GM23248 (cell line): ENCODE measurements at regions of chr10 and their contacts with region 1.

Region 1: DNA sequence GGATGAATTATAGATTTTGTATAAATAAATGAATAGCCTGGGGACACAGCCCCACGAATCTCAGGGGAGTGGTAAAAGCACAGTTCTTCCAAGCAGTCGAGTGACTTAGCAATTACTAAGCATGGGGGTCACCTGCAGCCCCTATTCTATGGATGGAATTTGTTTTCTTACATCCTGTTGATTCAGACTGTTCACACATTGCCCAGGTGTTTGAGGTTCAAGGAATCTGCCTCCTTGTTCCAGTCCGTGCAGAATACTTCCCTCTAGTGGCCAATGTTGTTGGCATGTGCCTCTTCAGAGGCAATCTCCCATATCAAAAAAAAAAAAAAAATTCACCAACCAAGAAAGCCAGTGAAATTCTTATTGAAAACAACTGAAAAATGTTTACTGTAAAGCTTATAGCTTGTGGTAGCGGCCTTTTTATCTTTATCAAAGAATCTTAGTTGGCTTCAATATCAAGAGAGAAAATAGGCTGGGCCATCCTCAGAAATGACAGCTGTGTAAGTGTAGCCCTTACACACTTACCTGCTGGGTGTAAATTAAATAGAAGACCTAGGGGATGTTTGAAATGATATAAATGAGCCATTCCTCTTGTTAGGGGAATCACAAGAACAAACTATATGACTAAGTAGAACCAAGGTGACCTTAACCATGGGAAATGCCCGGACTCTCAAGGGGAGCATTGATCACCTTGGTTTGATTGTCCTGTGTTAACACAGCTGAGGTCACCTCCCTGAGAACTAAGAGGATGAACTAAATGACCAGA is 7.8 kb downstream of the LIPM start:
- DNase-seq: peak; percentile 76
- H3K4me3 ChIP-seq: no peak overlapping the region
- H3K27ac ChIP-seq: no peak overlapping the region
- H3K4me1 ChIP-seq: peaks cover 2% of the 10 kb centered on the region; the same call in 1 of the 2 replicates
- H3K27me3 ChIP-seq: peaks cover 8% of the 10 kb centered on the region; the same call in 1 of the 2 replicates

Region 2: DNA sequence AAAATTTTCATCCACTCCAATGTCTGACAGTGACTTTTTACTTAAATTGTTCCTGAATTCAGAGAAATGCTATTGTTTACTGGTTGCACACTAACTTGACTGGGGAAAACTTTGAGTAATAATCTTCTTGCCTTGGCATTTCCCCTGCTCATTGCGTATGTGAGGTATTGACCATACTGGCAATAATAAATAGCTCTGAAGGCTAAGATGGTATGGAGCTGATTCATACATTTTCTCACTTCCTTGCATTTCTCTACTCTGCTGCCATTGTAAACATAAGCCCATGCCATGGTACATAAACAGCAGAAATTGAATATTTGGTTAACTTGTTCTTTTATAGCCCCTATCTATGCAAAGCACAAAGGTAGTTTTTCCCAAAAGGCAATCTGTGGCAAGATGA is 517.3 kb before region 1 on chr10:
- in situ Hi-C with region 1: no loop called
- DNase-seq: no peak
- H3K4me3 ChIP-seq: no peak overlapping the region
- H3K27ac ChIP-seq: no peak overlapping the region
- H3K4me1 ChIP-seq: no peaks in the 10 kb centered on the region
- H3K27me3 ChIP-seq: no peaks in the 10 kb centered on the region

Region 3: DNA sequence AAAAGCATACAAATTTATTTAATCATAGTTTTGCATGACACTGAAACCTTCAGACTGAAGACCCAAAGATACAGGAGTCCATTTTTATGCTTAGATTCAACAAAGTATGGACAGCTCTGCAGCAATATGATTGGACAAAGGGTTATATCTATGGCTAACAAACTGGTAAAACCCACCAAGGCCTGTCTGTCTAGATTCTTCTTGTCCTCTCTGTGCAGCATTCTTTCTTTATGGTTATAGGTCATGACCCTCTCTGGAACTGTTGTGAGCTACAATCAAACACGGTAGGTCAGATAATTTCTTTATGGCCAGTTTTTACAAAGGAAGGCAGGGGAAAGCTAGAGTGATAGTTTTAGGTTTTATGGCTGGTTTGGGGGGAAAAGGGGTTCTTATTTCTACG is 231.3 kb before region 1 on chr10:
- in situ Hi-C with region 1: loop called (anchors 10 kb)
- DNase-seq: no peak
- H3K4me3 ChIP-seq: no peak overlapping the region
- H3K27ac ChIP-seq: no peak overlapping the region
- H3K4me1 ChIP-seq: no peaks in the 10 kb centered on the region
- H3K27me3 ChIP-seq: no peaks in the 10 kb centered on the region

Region 4: DNA sequence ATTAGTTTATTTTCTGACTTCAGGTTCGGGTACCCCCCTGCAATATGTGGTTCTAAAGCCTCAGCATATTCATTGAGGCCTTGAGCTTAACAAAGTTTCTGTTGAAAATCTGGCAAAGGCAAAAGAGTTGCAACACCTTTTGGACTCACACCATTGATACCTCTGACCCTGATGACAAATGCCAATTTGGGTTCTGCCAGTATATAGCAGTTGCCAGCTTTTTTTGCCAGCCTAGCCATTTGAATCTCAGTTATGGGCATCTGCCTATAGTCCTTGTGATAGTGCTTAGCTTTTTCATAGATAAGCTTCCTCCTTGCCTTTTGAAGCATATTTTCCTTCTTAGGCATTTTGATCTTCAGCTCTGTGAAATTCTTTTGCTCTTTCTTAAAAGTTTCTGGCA is 191.9 kb before region 1 on chr10:
- in situ Hi-C with region 1: no loop called
- DNase-seq: peak; percentile 3
- H3K4me3 ChIP-seq: no peak overlapping the region
- H3K27ac ChIP-seq: no peak overlapping the region
- H3K4me1 ChIP-seq: no peaks in the 10 kb centered on the region
- H3K27me3 ChIP-seq: no peaks in the 10 kb centered on the region

Region 5: GRCh38 chr10:88693392-88694020 is 116.9 kb before region 1 on chr10:
- in situ Hi-C with region 1: loop called (anchors 10 kb)
- DNase-seq: peak; percentile 39
- H3K4me3 ChIP-seq: no peak overlapping the region
- H3K27ac ChIP-seq: no peak overlapping the region
- H3K4me1 ChIP-seq: no peaks in the 10 kb centered on the region
- H3K27me3 ChIP-seq: peaks cover 12% of the 10 kb centered on the region

Region 6: GRCh38 chr10:88932539-88933256 is 122.3 kb after region 1 on chr10:
- in situ Hi-C with region 1: no loop called
- DNase-seq: peak; percentile 96
- H3K4me3 ChIP-seq: no peak overlapping the region
- H3K27ac ChIP-seq: peak overlapping the region; percentile 25; the same call in 1 of the 2 replicates
- H3K4me1 ChIP-seq: peaks cover 10% of the 10 kb centered on the region
- H3K27me3 ChIP-seq: no peaks in the 10 kb centered on the region